ENCODE measurements at regions of chr2 and their contacts with region 1.

Region 1: GRCh38 chr2:9142551-9143263 is 63.9 kb upstream of the ASAP2 start:
- DNase-seq: peak; percentile 85 to 94 (median 88)
- ATAC-seq: peak; percentile 74 to 93 (median 90)
- H3K4me3 ChIP-seq: peak overlapping the region in 10 of 12 donors; percentile 3 to 46 (median 30)
- H3K27ac ChIP-seq: peak overlapping the region in 10 of 12 donors; percentile 10 to 74 (median 64)
- H3K4me1 ChIP-seq: peaks cover 0 to 17% (median 10%) of the 10 kb centered on the region in 12 donors
- H3K27me3 ChIP-seq: peaks cover 0 to 4% (median 0%) of the 10 kb centered on the region in 9 donors
- CTCF ChIP-seq: peak; percentile 97 to 100 (median 99)
- POLR2A ChIP-seq: no peak

Region 2: DNA sequence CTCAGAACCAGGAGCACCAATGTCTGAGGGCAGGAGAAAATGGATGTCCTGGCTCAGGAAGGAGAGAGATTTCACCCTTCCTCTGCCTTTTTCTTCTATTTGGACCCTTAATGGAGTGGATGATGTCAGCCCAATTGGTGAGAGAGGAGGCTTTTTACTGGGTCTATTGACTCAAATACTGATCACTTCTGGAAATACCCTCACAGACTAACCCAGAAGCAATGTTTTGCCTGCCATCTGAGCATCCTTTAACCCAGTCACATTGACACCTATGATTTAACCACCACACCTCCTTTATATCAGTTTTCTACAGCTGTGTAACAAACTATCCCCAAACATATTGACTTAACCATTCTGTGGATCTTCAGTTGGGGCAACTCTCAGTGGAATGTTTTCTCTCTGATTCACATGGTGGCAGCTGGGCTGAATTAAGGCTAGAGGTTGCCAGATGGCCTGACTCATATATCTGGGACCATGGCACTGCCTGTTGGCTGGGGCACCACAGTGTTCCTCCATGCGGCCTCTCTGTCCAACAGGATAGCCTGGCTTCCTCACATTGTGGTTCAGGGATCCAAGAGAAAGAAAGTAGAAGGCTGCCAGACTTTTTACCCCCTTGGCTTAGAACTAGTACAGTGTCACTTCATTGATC is 121.0 kb before region 1 on chr2:
- intact Hi-C with region 1: no loop called
- DNase-seq: no peak
- ATAC-seq: no peak
- H3K4me3 ChIP-seq: no peak overlapping the region
- H3K27ac ChIP-seq: no peak overlapping the region
- H3K4me1 ChIP-seq: no peaks in the 10 kb centered on the region
- H3K27me3 ChIP-seq: no peaks in the 10 kb centered on the region
- CTCF ChIP-seq: no peak
- POLR2A ChIP-seq: no peak

Region 3: DNA sequence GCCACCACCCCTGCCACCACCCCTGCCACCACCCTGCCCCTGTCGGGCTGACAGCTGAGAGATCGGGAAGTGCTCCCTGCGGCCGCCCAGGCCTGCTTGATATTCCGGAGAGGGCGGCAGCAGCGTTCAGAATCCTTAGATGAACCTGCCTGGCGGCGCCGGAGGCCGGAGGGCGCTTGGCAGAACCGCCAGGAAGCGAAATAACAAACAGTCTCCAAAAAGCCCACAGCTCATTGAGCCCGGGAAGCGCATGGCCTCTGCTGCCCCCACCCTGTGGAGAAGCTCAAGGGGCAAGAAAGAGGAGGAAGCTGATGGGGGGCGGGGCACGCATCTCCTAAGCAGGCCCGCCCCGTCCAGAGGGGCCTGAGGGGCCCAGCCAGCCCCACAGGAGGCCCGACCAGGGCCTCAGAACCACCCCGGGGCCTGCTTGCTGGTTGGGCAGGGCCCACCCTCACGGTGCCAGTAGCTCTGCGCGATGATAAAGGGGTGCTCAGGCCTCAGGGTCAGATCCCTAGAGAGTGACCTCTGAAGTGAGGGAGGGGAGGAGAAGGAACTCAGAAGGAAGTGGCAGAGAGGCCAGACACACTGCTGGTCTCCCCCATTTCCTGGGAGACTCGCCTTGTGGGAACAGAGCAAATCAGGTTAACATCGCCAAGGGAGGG is 46.9 kb before region 1 on chr2:
- intact Hi-C with region 1: no loop called
- DNase-seq: peak; percentile 64 to 84 (median 69)
- ATAC-seq: peak; percentile 39 to 90 (median 80)
- H3K4me3 ChIP-seq: peak overlapping the region in 7 of 12 donors; percentile 12 to 42 (median 26)
- H3K27ac ChIP-seq: peak overlapping the region in 7 of 12 donors; percentile 16 to 69 (median 48)
- H3K4me1 ChIP-seq: peaks cover 0 to 28% (median 11%) of the 10 kb centered on the region in 12 donors
- H3K27me3 ChIP-seq: no peaks in the 10 kb centered on the region
- CTCF ChIP-seq: peak in 8 of 12 donors; percentile 6 to 52 (median 26)
- POLR2A ChIP-seq: no peak

Region 4: DNA sequence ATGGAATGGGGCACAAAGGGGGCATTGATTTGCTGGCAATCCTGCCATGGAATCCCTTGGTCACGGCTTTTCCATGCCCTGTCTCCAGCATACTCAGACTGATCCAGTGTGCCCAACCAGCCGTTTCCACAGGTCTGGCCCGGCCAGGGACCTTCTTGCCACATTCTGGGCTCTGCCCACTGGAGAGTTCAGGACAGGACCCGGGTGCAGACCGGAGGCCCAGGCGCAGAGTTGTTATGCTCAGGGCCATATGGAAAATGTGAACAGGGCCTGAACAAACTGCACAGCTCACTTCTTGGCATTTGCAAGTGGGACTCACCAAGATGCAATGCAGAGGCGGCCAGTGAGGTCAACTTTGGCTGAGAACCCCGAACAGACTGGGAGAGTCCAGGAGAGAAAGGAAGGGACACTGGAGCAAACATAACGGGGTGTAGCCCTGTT is 48.4 kb after region 1 on chr2:
- intact Hi-C with region 1: loop called in 1 of 10 experiments (anchors 5 kb)
- DNase-seq: peak; percentile 69 to 92 (median 84)
- ATAC-seq: peak; percentile 90 to 96 (median 93)
- H3K4me3 ChIP-seq: no peak overlapping the region
- H3K27ac ChIP-seq: peak overlapping the region; percentile 48 to 88 (median 76)
- H3K4me1 ChIP-seq: peaks cover 0 to 35% (median 13%) of the 10 kb centered on the region in 12 donors
- H3K27me3 ChIP-seq: no peaks in the 10 kb centered on the region
- CTCF ChIP-seq: no peak
- POLR2A ChIP-seq: no peak

Region 5: DNA sequence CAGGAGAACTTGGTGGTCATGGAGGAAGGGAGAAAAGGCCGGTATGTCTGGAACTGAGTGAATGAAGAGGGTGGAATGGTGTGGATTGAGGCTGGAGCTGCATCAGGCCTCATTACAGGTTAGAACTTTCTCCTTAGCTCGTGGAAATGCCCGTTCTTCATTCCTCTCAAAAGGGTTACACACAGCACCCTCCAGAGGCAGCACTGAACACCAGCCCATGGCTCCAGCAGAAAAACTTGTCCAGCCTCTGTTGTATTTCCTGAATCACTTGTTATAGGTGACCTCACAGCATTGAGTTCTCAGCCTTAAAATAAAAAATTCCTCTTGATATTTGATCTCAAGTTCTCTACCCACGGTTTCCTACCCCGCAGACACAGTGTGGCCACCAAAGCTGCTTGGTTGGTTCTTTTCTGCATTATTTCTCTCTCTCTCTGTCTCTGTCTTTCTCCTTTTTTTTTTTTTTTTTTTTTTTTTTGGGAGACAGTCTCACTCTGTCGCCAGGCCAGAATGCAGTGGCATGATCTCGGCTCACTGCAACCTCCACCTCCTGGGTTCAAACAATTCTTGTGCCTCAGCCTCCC is 191.0 kb after region 1 on chr2:
- intact Hi-C with region 1: loop called (anchors 1 to 5 kb)
- DNase-seq: peak in 4 of 5 donors; percentile 61 to 68 (median 63)
- ATAC-seq: peak; percentile 68 to 87 (median 83)
- H3K4me3 ChIP-seq: no peak overlapping the region
- H3K27ac ChIP-seq: peak overlapping the region in 4 of 12 donors; percentile 10 to 31 (median 15)
- H3K4me1 ChIP-seq: peaks cover 0 to 65% (median 20%) of the 10 kb centered on the region in 12 donors
- H3K27me3 ChIP-seq: no peaks in the 10 kb centered on the region
- CTCF ChIP-seq: peak; percentile 61 to 82 (median 70)
- POLR2A ChIP-seq: no peak

Region 6: DNA sequence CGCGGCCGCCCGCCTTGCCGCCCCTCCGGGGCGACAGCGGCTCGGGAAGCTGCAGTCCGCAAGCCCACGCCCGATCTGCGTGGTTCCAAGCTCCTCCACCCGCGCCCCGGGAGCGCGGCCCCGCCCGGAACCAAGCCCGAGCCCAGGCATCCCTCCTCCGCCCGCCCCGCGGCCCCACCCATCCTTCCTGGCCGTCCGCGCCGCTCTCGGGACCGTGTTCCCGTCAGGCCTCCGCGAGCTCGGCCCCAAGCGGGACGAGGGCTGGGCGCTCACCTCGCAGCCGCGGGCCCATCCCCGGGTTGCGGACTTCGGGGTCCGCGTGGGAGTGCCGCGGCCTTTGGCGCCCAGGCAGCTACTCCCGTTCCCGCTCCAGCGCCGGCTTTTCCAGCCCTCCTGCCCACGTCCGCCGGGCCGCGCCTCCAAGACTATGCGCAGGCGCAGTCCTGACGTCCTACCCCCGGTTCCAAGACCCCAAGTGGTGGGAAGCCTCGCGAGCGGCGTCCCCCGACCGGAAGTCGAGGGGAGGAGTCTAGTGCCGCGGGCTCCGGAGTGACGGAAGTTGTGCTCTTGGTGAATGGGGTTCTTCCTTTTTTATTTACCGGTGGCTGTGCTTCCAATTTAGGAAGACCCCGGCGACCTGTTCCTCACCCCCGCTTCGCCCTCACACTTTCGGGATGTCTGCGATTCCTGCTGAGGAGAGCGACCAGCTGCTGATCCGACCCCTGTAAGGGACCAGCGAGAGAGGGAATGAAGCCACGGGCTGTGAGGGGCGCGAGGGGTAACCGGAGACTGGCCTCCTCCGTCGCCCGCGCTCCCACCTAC is 280.6 kb after region 1 on chr2 and contains the starts of genes CPSF3 and ITGB1BP1:
- intact Hi-C with region 1: loop called in 5 of 10 experiments (anchors 2 to 10 kb)
- DNase-seq: peak; percentile 98 to 99 (median 98)
- ATAC-seq: peak; percentile 96 to 97 (median 96)
- H3K4me3 ChIP-seq: peak within 1 kb of the TSS; percentile 54 to 98 (median 94)
- H3K27ac ChIP-seq: peak within 1 kb of the TSS; percentile 90 to 98 (median 94)
- H3K4me1 ChIP-seq: peaks cover 0 to 57% (median 34%) of the 10 kb centered on the region in 12 donors
- H3K27me3 ChIP-seq: no peaks in the 10 kb centered on the region
- CTCF ChIP-seq: peak in 2 of 12 donors; percentile 25 to 35
- POLR2A ChIP-seq: peak in 1 of 2 donors; percentile 75
- total RNA-seq, gene CPSF3: 13.8 to 27.5 (median 18.3) TPM
- total RNA-seq, gene ITGB1BP1: 26.5 to 163 (median 104) TPM

Region 7: GRCh38 chr2:9555297-9556141 is 412.8 kb after region 1 on chr2 and contains the start of gene ADAM17:
- intact Hi-C with region 1: loop called in 1 of 10 experiments (anchors 5 kb)
- DNase-seq: peak; percentile 97 to 99 (median 98)
- ATAC-seq: peak; percentile 89 to 98 (median 96)
- H3K4me3 ChIP-seq: peak within 1 kb of the TSS; percentile 53 to 98 (median 90)
- H3K27ac ChIP-seq: peak within 1 kb of the TSS; percentile 98 to 100 (median 99)
- H3K4me1 ChIP-seq: peaks cover 11 to 60% (median 40%) of the 10 kb centered on the region in 12 donors
- H3K27me3 ChIP-seq: no peaks in the 10 kb centered on the region
- CTCF ChIP-seq: peak; percentile 24 to 71 (median 46)
- POLR2A ChIP-seq: peak; percentile 41 to 87
- total RNA-seq, gene ADAM17: 8.9 to 22.4 (median 15.1) TPM

Measured in heart left ventricle (tissue), 16 donors.